ENCODE measurements at regions of chr17 and their contacts with region 1.

Region 1: GRCh38 chr17:6427279-6427781 is 7.6 kb downstream of the AIPL1 start:
- DNase-seq: peak; percentile 74
- H3K4me3 Mint-ChIP-seq: peak overlapping the region; percentile 21
- H3K27ac Mint-ChIP-seq: peak overlapping the region; percentile 73
- H3K4me1 Mint-ChIP-seq: peaks cover 19% of the 10 kb centered on the region
- H3K27me3 Mint-ChIP-seq: peaks cover 51% of the 10 kb centered on the region

Region 2: DNA sequence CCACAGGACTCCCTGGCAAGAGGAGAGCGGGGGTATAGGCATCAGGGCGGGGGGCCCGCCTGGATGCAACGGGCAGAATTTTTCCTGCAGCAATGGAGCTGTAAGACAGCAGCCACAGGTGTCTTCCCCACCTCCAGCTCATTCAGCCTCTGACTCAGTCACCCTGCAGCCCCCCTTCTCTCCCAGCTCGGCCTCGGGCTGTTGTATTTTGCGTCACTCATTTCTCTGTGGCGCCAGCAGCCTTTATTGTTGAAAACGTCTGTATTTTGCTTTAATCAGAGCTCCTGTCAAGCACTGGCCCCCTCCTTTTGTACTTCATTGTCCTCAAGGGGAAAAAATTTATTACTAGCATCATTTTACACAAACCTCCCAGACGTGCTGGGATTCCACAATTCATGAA is 239.5 kb before region 1 on chr17:
- intact Hi-C with region 1: no loop called
- DNase-seq: no peak
- H3K4me3 Mint-ChIP-seq: no peak overlapping the region
- H3K27ac Mint-ChIP-seq: no peak overlapping the region
- H3K4me1 Mint-ChIP-seq: no peaks in the 10 kb centered on the region
- H3K27me3 Mint-ChIP-seq: no peaks in the 10 kb centered on the region

Region 3: GRCh38 chr17:6443692-6444569 is 16.6 kb after region 1 on chr17 and contains the start of gene PIMREG:
- intact Hi-C with region 1: loop called (anchors 1 kb)
- DNase-seq: peak; percentile 91
- H3K4me3 Mint-ChIP-seq: peak within 1 kb of the TSS; percentile 95
- H3K27ac Mint-ChIP-seq: peak within 1 kb of the TSS; percentile 97
- H3K4me1 Mint-ChIP-seq: peaks cover 14% of the 10 kb centered on the region
- H3K27me3 Mint-ChIP-seq: peaks cover 32% of the 10 kb centered on the region
- total RNA-seq, gene PIMREG: 6.8 and 8.0 TPM in 2 replicates